ENCODE measurements at regions of chr2 and their contacts with region 1.

Region 1: GRCh38 chr2:131492418-131493198 is 411 bp upstream of the MZT2A start:
- DNase-seq: peak; percentile 95
- ATAC-seq: peak; percentile 81
- H3K4me3 Mint-ChIP-seq: peak overlapping the region; percentile 99
- H3K27ac Mint-ChIP-seq: peak overlapping the region; percentile 99
- H3K4me1 Mint-ChIP-seq: peaks cover 36% of the 10 kb centered on the region
- H3K27me3 Mint-ChIP-seq: no peaks in the 10 kb centered on the region

Region 2: GRCh38 chr2:130342533-130343275 is 1149.9 kb before region 1 on chr2 and contains the start of gene IMP4:
- CTCF ChIA-PET with region 1: no interaction called
- POLR2A ChIA-PET with region 1: no interaction called
- intact Hi-C with region 1: loop called (anchors 2 to 5 kb)
- DNase-seq: peak; percentile 96
- ATAC-seq: peak; percentile 92
- H3K4me3 Mint-ChIP-seq: peak within 1 kb of the TSS; percentile 98
- H3K27ac Mint-ChIP-seq: peak within 1 kb of the TSS; percentile 100
- H3K4me1 Mint-ChIP-seq: peaks cover 28% of the 10 kb centered on the region
- H3K27me3 Mint-ChIP-seq: no peaks in the 10 kb centered on the region
- total RNA-seq, gene IMP4: 148 to 169 TPM

Region 3: GRCh38 chr2:130899306-130899705 is 593.3 kb before region 1 on chr2:
- CTCF ChIA-PET with region 1: no interaction called
- POLR2A ChIA-PET with region 1: no interaction called
- intact Hi-C with region 1: no loop called
- DNase-seq: no peak
- ATAC-seq: no peak
- H3K4me3 Mint-ChIP-seq: no peak overlapping the region
- H3K27ac Mint-ChIP-seq: no peak overlapping the region
- H3K4me1 Mint-ChIP-seq: no peaks in the 10 kb centered on the region
- H3K27me3 Mint-ChIP-seq: peaks cover 10% of the 10 kb centered on the region

Region 4: GRCh38 chr2:131093006-131093695 is 399.5 kb before region 1 on chr2 and contains the start of gene FAM168B:
- CTCF ChIA-PET with region 1: interaction called, 3 read pairs
- POLR2A ChIA-PET with region 1: no interaction called
- intact Hi-C with region 1: loop called in 1 of 2 experiments (anchors 1 kb)
- DNase-seq: peak; percentile 93
- ATAC-seq: peak; percentile 85
- H3K4me3 Mint-ChIP-seq: peak within 1 kb of the TSS; percentile 81
- H3K27ac Mint-ChIP-seq: peak within 1 kb of the TSS; percentile 97
- H3K4me1 Mint-ChIP-seq: peaks cover 26% of the 10 kb centered on the region
- H3K27me3 Mint-ChIP-seq: no peaks in the 10 kb centered on the region
- total RNA-seq, gene FAM168B: 59.8 to 74.7 TPM

Region 5: GRCh38 chr2:131154071-131154531 is 338.5 kb before region 1 on chr2:
- CTCF ChIA-PET with region 1: interaction called, 3 read pairs
- POLR2A ChIA-PET with region 1: no interaction called
- intact Hi-C with region 1: loop called (anchors 1 kb)
- DNase-seq: peak; percentile 93
- ATAC-seq: peak; percentile 99
- H3K4me3 Mint-ChIP-seq: no peak overlapping the region
- H3K27ac Mint-ChIP-seq: peak overlapping the region; percentile 1
- H3K4me1 Mint-ChIP-seq: peaks cover 31% of the 10 kb centered on the region
- H3K27me3 Mint-ChIP-seq: no peaks in the 10 kb centered on the region

Region 6: DNA sequence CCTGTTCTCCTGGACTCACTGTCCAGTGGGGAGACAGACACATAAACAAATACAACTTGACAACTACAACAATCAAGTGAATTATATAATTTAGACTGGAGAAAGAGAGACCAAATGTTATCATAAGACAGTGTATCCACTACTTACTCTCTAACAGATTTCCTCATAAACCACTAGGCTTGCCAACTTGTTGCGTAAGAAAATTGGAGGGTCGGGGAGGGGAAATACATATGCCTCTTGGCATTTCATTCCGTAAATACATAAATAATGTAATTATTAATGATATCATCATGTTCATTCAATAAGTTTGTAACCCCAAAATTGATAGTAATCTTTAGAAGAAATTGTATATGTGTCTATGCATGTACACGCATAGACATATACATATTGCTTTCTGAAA is 143.6 kb before region 1 on chr2:
- CTCF ChIA-PET with region 1: no interaction called
- POLR2A ChIA-PET with region 1: no interaction called
- intact Hi-C with region 1: no loop called
- DNase-seq: no peak
- ATAC-seq: no peak
- H3K4me3 Mint-ChIP-seq: no peak overlapping the region
- H3K27ac Mint-ChIP-seq: no peak overlapping the region
- H3K4me1 Mint-ChIP-seq: no peaks in the 10 kb centered on the region
- H3K27me3 Mint-ChIP-seq: peaks cover 21% of the 10 kb centered on the region

Region 7: GRCh38 chr2:131521961-131522794 is 29.6 kb after region 1 on chr2:
- CTCF ChIA-PET with region 1: interaction called, 3 read pairs
- POLR2A ChIA-PET with region 1: interaction called, 3 read pairs
- intact Hi-C with region 1: loop called (anchors 1 kb)
- DNase-seq: no peak
- ATAC-seq: no peak
- H3K4me3 Mint-ChIP-seq: no peak overlapping the region
- H3K27ac Mint-ChIP-seq: no peak overlapping the region
- H3K4me1 Mint-ChIP-seq: no peaks in the 10 kb centered on the region
- H3K27me3 Mint-ChIP-seq: no peaks in the 10 kb centered on the region

Region 8: DNA sequence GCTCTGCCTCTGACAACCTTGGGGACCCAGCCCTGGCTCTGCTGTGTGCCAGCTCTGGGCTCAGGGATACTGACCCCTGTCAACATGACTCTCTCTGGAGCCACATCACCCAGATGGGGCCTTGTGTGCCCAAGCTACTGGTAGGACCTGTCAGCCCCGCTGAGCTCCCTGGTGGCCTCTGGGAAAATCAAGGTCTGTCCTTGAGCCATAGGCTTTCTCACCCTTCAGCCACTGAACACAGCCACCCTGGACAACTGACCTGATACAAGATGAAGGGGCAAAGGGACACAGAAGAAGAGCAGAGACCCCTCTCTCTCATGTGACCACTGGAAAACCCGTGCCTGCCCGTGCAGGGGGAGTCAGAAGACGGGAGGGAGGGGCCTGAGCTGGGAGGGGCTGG is 42.9 kb after region 1 on chr2:
- CTCF ChIA-PET with region 1: no interaction called
- POLR2A ChIA-PET with region 1: no interaction called
- intact Hi-C with region 1: no loop called
- DNase-seq: no peak
- ATAC-seq: no peak
- H3K4me3 Mint-ChIP-seq: no peak overlapping the region
- H3K27ac Mint-ChIP-seq: no peak overlapping the region
- H3K4me1 Mint-ChIP-seq: no peaks in the 10 kb centered on the region
- H3K27me3 Mint-ChIP-seq: no peaks in the 10 kb centered on the region

Region 9: DNA sequence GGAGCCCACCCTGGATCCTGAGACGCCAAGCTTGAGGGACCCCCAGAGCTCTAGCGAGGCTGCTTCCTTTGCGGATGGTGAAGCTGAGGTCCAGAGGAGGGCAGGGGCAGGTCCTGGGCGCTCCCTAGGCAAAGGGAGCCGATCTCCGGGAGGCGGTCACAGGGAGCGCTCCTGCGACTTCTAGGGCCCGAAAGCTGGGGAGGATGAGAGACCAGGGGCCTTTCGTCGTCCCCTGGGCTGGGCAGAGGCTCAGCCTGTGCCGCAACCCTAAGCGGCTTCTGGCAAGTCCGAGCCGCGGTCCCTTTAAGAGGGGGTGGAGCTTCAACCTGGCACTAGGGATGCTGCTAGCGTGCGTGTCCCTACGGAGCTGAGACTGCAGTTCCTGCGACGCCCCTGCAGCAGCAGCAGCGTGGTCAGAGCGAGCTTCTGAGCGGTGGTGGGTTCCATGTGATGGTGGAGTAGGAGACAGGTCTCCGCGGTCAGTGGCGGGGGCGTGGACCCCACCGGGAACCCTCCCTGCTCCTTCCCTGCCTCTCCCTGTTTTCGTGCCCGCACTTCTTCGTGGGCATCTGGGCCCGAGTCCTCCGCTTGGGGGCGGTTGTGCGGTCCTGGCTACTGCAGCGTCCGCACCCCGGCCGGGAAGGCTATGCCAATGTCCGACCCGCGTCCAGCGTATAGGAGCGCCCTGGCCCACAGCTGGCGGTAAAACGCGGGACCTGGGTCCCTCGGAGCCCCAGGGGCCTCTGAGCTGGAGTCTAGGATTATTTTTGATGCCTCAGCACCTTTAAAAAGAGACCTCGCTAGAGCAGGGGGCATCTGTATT is 189.7 kb after region 1 on chr2:
- CTCF ChIA-PET with region 1: no interaction called
- POLR2A ChIA-PET with region 1: no interaction called
- intact Hi-C with region 1: loop called in 1 of 2 experiments (anchors 2 kb)
- DNase-seq: peak; percentile 88
- ATAC-seq: peak; percentile 99
- H3K4me3 Mint-ChIP-seq: peak overlapping the region; percentile 82
- H3K27ac Mint-ChIP-seq: peak overlapping the region; percentile 76
- H3K4me1 Mint-ChIP-seq: peaks cover 32% of the 10 kb centered on the region
- H3K27me3 Mint-ChIP-seq: peaks cover 3% of the 10 kb centered on the region

Region 10: DNA sequence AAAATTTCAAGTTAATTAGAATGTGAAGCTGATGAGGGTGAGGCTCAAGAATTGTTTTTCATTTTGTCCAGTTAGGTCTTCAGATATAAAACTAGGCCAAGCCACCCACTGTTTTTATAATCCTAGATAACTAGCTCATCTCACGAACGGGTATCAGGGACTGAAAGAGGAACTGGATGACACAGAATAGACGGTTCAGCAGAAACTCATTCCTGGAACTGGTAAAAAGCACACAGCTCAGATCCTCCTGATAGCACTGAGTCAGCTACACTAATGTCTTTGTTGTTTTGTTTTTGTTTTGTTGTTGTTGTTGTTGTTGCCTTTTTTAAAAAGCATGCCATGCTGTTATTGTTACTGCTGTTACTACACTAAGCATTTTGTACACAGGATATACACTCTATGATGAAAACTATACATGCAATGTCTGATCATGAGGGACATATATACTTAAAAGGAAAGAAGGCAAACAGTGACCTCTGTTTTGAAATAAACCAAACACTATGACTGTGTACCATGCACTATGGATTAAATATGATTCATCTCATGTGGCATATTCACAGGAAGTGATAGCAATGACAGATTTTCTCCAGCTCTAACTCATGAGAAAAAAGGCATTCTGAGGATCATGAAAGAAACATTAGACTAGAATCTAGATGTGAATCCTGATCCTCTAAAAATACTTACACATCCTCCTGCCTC is 1638.1 kb after region 1 on chr2:
- CTCF ChIA-PET with region 1: no interaction called
- POLR2A ChIA-PET with region 1: no interaction called
- intact Hi-C with region 1: no loop called
- DNase-seq: no peak
- ATAC-seq: no peak
- H3K4me3 Mint-ChIP-seq: no peak overlapping the region
- H3K27ac Mint-ChIP-seq: no peak overlapping the region
- H3K4me1 Mint-ChIP-seq: no peaks in the 10 kb centered on the region
- H3K27me3 Mint-ChIP-seq: peaks cover 2% of the 10 kb centered on the region